ENCODE measurements at regions of chr2 and their contacts with region 1.

Region 1: DNA sequence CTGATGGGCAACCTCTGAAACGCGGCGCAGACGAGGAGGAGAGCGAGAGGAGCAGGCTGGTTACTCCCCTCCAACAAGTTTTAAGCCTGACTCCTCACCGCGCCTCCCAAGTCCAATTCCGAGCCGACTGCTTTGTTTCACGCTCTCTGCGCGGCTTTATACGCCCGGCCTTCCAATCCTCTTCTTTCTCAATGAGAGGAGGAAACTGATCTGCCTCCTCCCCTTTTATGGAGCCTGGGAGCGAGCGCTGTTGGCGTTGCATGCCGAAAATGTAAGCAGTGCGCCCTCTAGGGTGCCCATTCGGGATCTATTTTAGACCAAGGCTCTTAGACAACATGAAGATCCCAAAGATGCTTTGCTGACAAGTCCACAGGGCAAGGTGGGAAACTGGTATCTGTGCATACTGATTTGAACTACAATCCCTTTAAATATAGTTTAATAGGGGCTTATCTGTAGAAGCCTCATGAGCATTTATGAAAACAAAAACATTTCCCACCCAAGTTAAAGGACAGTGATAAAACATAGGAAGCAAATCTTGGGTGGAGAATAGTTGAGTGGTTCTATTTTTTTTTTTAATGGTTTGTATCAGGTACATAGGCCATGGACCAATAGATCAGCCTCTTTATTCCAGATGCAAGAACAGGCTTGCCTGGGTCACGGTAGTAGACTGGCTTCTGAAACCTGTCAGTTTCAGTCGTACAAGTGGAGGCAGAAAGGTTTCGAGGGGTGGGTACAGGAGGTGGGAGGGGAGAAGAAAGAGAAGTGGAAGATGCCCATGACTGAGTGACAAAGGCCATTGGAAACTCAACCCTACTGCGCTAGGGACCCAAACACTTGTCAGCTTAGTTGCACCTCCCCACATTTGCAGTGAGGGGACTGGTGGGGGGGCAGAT is at the start of gene RND3:
- DNase-seq: peak; percentile 95 to 96
- H3K4me3 ChIP-seq: peak within 1 kb of the TSS; percentile 20
- H3K4me1 ChIP-seq: peaks cover 13% of the 10 kb centered on the region
- H3K27me3 ChIP-seq: no peaks in the 10 kb centered on the region

Region 2: DNA sequence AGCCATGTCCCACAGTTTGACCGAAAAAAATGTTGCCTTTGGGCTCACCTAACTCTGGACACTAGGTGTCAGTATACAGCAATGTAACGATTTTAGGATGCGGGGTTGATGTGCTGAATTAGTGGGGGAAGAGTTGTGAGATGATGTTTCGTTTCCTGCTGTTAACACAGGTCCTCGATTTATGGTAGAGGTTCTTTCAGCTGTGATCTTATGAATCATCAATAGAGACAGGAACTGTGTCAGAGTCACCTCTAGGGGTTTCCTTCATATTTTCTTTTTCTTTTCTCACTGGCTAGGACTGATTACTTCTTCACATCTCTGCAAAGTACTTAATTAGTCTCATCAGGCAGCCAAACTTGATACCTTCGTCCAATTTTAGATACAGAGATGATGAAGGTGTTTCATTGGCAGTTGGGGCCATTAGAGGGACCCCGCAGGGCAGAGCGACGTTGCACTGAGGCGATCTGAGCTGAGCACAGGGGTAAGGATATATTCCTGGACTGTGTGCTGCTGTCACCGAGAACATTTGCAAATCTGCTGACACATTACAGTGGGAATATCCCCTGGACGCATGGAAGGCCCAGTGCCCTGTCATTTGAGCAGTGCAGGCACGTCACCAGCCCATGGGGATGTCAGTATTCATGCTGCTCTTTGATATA is 890.0 kb before region 1 on chr2:
- in situ Hi-C with region 1: loop called (anchors 10 kb)
- DNase-seq: peak; percentile 53 to 61
- H3K4me3 ChIP-seq: no peak overlapping the region
- H3K4me1 ChIP-seq: peaks cover 24% of the 10 kb centered on the region
- H3K27me3 ChIP-seq: no peaks in the 10 kb centered on the region

Region 3: DNA sequence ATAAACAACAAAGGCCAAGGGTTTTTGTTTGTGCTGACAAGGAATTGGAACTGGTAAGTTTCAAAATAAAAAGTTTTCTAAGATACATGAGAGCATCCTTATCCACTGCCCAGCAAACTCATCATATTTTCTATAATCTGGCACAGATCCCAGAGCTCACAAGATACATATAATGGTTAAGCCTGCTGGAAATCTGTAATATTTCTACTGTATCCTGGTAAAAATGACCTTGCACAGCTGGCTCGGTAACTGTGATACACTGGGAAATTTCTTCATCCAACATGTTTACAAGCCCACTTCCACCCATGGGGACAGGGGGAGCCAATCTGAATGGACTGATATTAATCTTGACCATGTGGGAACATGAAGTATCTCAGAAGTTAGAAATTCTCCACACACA is 474.8 kb before region 1 on chr2:
- in situ Hi-C with region 1: no loop called
- DNase-seq: no peak
- H3K4me3 ChIP-seq: no peak overlapping the region
- H3K4me1 ChIP-seq: no peaks in the 10 kb centered on the region
- H3K27me3 ChIP-seq: no peaks in the 10 kb centered on the region

Measured in HAP-1 (cell line).